ENCODE measurements at regions of chr7 and their contacts with region 1.

Region 1: GRCh38 chr7:21261627-21262594 is 166.0 kb upstream of the SP4 start:
- DNase-seq: peak; percentile 33
- CTCF ChIP-seq: peak; percentile 60

Region 2: GRCh38 chr7:21507626-21508343 is 245.9 kb after region 1 on chr7:
- in situ Hi-C with region 1: loop called (anchors 25 kb)
- DNase-seq: no peak
- CTCF ChIP-seq: peak; percentile 55

Region 3: DNA sequence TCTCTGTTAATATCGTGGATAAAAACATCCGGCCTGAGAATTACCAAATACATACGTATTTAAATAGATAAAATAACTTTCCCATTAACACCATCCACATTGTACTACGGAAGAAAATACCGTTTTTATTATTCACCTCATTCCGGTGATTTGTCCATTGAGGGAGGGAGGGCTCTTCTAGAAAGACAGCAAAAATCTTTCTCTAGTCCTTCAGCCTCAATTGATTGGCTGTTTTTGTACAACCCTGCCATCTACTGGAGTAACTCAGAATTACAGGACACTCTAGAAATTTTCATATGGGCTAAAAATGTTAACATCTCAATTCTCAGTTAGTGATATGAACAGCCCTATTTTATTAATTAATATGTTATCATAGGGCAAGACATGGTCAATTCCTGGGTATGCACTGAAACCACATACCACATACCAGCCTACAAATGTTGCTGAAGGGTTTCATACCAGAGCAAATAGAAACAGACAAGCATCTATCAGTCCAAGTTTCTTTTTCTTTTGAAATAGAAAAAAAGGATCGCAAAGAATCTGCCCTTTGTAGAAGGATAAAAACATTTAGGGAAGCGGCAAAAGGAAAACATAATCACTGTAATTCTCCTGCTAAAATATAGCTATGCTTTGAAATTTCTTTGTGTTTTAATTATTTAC is 739.6 kb after region 1 on chr7:
- in situ Hi-C with region 1: loop called (anchors 25 kb)
- DNase-seq: peak; percentile 72
- CTCF ChIP-seq: peak; percentile 74